ENCODE measurements at regions of chr6 and their contacts with region 1.

Region 1: DNA sequence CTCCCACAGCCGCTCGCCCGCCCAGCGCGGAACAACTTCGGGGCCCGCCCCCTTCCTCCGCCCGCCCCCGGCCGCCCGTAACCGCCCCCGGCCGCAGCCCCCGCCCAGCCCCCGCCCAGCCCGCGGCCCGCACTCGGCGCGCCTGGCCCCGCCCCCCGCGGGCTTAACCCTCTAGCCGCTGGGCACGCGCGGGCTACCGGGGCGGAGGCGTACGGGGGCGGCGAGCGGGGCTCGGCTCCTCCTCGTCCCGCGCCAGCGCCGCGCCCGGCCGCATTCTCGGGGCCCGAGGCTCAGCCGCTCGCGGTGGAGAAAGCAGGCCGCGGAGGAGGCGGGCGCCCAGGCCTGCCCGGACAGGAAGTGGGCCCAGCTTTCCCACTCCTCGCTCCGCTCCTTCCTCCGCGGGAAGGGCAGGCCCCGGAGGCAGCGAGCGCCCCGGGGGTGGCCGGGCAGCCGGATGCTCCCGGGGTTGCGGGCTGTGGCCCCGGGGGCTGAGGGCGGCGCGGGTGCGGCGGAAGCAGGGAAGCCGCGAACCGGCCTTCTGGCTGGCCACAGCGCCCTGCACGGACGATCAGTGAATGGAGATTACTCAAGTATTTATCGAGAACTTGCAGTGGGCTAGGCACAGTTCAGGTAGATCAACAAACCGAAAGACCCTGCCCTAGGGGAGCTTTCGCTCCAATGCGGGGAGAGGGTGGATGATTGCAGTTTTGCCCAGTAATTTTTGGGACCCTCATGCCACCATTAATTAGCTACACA is at the start of gene TRAM2:
- DNase-seq: peak; percentile 92
- total RNA-seq, gene TRAM2: 40.8 to 46.9 TPM

Region 2: DNA sequence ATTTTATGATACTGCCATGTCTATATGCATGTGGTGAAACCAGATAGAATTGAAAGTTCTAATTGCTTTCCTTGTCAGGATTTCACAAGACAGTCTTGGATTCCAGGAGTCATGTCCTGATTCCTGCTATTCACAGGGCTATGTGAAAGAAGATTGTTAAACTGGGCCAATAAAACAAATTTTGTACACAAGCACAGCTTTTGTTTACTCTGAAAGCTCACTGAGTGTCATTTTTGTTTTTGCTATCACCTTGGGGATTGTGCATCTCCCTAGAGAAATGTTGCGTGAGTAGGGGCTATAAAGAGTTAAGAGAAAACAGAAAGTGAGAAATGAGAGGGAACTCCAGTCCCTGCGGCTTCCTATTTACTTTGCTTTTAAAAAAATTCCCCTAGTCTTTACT is 1117.2 kb before region 1 on chr6:
- intact Hi-C with region 1: loop called in 1 of 2 experiments (anchors 10 kb)
- DNase-seq: no peak

Region 3: GRCh38 chr6:52512199-52512598 is 65.0 kb before region 1 on chr6:
- intact Hi-C with region 1: loop called in 1 of 2 experiments (anchors 2 kb)
- DNase-seq: no peak

Region 4: GRCh38 chr6:52664186-52664990 is 87.2 kb after region 1 on chr6:
- intact Hi-C with region 1: loop called in 1 of 2 experiments (anchors 10 kb)
- DNase-seq: peak; percentile 95

Measured in posterior vena cava (tissue), 2 donors.